ENCODE measurements at regions of chr3 and their contacts with region 1.

Region 1: DNA sequence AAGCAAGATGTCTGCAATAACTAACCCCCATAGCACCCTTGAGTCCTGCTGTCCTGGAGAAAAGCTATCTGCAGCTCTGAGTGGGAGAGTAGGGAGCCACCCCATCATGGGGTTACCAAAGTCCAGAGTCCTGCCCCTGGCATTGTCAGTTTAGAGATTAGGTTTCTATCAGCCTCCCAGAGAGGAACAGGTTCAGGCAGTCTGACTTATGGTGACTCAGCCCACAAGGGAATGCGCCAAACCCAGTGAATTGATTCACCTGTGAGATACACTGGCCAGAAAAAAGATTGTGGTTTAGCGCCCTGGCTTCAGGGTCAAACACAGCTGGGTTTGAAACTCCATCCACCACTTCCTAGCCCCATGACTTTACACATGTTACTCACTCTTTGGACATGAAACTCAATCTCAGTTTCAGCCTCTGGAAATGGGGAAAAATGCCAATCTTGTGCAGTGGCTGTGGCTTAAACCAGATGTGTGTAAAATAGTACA is 263.6 kb upstream of the HES1 start:
- DNase-seq: peak; percentile 94
- H3K4me3 Mint-ChIP-seq: no peak overlapping the region
- H3K27ac Mint-ChIP-seq: peak overlapping the region; percentile 70
- H3K4me1 Mint-ChIP-seq: peaks cover 91% of the 10 kb centered on the region
- H3K27me3 Mint-ChIP-seq: no peaks in the 10 kb centered on the region
- CTCF ChIP-seq: no peak

Region 2: GRCh38 chr3:193842029-193842798 is 30.1 kb before region 1 on chr3:
- CTCF ChIA-PET with region 1: interaction called, 19 read pairs
- intact Hi-C with region 1: loop called (anchors 1 kb)
- DNase-seq: no peak
- H3K4me3 Mint-ChIP-seq: peak overlapping the region; percentile 59
- H3K27ac Mint-ChIP-seq: peak overlapping the region; percentile 96
- H3K4me1 Mint-ChIP-seq: peaks cover 94% of the 10 kb centered on the region
- H3K27me3 Mint-ChIP-seq: no peaks in the 10 kb centered on the region
- CTCF ChIP-seq: no peak

Region 3: DNA sequence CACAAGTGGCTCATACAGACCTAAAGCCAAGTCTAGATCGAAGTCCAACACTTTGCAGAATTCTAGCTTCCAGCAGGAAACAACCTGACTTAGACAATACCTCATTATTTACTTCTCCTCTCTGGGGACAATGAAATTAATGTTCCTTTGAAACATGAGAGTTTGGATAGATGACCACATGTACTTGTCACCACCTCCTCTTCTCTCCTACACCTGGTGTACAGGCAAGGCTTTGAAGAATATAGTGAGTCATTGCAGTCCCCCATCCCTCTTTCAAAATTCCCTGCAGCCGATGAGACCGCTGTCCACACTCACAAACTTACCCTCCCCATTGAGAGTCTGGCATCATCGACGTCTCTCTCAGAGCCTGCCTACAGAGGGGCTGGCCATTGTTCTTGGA is 74.6 kb after region 1 on chr3:
- CTCF ChIA-PET with region 1: interaction called, 3 read pairs
- intact Hi-C with region 1: loop called (anchors 5 kb)
- DNase-seq: peak; percentile 72
- H3K4me3 Mint-ChIP-seq: no peak overlapping the region
- H3K27ac Mint-ChIP-seq: peak overlapping the region; percentile 52
- H3K4me1 Mint-ChIP-seq: peaks cover 42% of the 10 kb centered on the region
- H3K27me3 Mint-ChIP-seq: no peaks in the 10 kb centered on the region
- CTCF ChIP-seq: no peak

Region 4: GRCh38 chr3:194003125-194004057 is 131.1 kb after region 1 on chr3:
- CTCF ChIA-PET with region 1: interaction called, 8 read pairs
- intact Hi-C with region 1: loop called (anchors 1 kb)
- DNase-seq: peak; percentile 93
- H3K4me3 Mint-ChIP-seq: peak overlapping the region; percentile 68
- H3K27ac Mint-ChIP-seq: peak overlapping the region; percentile 88
- H3K4me1 Mint-ChIP-seq: peaks cover 54% of the 10 kb centered on the region
- H3K27me3 Mint-ChIP-seq: no peaks in the 10 kb centered on the region
- CTCF ChIP-seq: no peak

Region 5: DNA sequence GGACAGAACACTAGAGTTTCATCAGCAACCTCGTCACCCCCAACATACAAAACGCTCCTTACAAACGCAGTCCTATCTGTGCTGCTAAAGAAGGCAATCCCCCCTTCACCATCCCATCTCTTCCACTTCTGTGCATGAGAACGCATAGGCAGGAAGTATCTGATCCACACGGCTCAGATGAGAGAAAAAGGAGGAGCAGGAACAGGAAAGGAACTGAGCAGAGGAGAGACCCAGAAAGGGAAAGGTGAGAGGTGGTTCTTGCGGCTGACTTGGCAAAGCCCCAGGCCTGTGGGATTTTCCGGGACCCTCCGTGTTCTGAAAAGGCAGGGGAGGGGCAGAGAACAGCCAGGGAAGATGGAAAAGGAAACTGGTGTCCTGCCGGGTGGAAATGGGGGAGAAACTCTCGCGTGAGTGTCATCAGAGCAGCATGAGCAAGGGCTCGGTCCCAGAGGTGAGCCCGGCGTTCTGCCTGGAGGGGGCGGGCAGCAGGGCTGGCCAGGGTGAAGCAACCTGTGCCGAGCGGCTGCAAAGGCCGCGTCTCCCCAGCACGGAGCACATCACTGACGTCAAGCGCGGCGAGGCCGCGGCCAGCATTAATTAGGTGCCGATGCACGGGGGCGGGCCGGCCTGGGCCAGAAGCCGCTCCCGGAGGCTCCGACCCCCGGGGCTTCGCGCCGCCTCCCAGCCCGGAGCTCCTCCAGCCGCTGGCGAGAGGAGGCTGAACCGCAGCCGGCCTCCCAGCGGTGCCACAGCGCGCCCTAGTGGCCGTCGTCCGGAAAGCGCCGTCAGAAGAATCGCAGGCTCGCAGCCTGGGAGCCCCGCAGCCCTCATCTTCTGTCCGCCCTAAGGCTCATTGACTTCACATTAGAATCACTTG is 443.0 kb after region 1 on chr3:
- CTCF ChIA-PET with region 1: interaction called, 22 read pairs
- intact Hi-C with region 1: loop called (anchors 5 kb)
- DNase-seq: peak; percentile 98
- H3K4me3 Mint-ChIP-seq: peak overlapping the region; percentile 69
- H3K27ac Mint-ChIP-seq: peak overlapping the region; percentile 87
- H3K4me1 Mint-ChIP-seq: peaks cover 36% of the 10 kb centered on the region
- H3K27me3 Mint-ChIP-seq: no peaks in the 10 kb centered on the region
- CTCF ChIP-seq: peak; percentile 99